ENCODE measurements at regions of chr11 and their contacts with region 1.

Region 1: GRCh38 chr11:109946322-109946846 is 146.8 kb upstream of the ZC3H12C start:
- DNase-seq: peak; percentile 64 to 78
- ATAC-seq: peak; percentile 99
- H3K4me3 ChIP-seq: peak overlapping the region; percentile 27 to 37 (median 34)
- H3K27ac ChIP-seq: peak overlapping the region; percentile 64 to 70 (median 66)
- H3K4me1 ChIP-seq: peaks cover 6 to 8% of the 10 kb centered on the region in 2 donors
- H3K27me3 ChIP-seq: no peaks in the 10 kb centered on the region
- CTCF ChIP-seq: peak; percentile 83 to 93 (median 87)
- POLR2A ChIP-seq: peak in 1 of 2 donors; percentile 17

Region 2: GRCh38 chr11:108713076-108713790 is 1233.2 kb before region 1 on chr11:
- in situ Hi-C with region 1: loop called in 1 of 4 experiments (anchors 25 kb)
- intact Hi-C with region 1: no loop called
- DNase-seq: no peak
- ATAC-seq: no peak
- H3K4me3 ChIP-seq: no peak overlapping the region
- H3K27ac ChIP-seq: no peak overlapping the region
- H3K4me1 ChIP-seq: no peaks in the 10 kb centered on the region
- H3K27me3 ChIP-seq: no peaks in the 10 kb centered on the region
- CTCF ChIP-seq: no peak
- POLR2A ChIP-seq: no peak

Region 3: GRCh38 chr11:108853864-108854263 is 1092.5 kb before region 1 on chr11:
- in situ Hi-C with region 1: no loop called
- intact Hi-C with region 1: no loop called
- DNase-seq: peak in 1 of 2 donors; percentile 55
- ATAC-seq: peak; percentile 74 to 91
- H3K4me3 ChIP-seq: peak overlapping the region; percentile 17 to 20 (median 18)
- H3K27ac ChIP-seq: peak overlapping the region; percentile 46 to 69 (median 62)
- H3K4me1 ChIP-seq: peaks cover 32% of the 10 kb centered on the region in 2 donors
- H3K27me3 ChIP-seq: no peaks in the 10 kb centered on the region
- CTCF ChIP-seq: no peak
- POLR2A ChIP-seq: no peak

Region 4: DNA sequence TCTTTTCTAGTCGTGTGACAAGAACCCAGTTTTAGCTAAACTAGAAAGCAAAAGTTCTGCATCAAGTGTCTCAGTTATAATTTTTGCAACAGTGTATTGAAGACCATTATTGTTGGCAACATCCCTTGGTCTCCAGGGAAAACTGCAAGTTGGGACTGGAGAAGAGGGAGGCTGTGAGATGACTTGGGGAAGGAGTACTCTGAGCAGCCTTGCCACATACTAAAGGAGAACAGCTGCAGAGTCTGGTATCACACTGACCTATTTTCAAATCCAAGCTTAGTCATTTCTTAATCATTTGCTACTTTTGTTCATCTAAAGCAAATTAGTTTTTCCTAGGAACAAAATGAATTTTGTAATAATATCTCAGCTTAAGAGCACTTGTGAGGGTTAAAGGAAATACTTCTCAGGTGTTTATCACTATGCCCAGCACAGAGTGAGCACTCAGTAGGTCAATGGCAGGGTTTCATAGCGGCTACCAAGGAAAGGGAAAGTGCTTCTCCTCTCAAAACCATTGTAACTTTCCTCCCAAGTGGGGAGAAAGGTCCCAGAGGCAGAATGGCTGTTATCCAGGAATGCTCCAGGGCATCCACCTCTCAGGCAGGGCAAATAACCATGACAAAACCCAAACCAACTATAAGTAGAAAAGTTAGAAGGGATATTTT is 277.3 kb before region 1 on chr11:
- in situ Hi-C with region 1: no loop called
- intact Hi-C with region 1: no loop called
- DNase-seq: no peak
- ATAC-seq: no peak
- H3K4me3 ChIP-seq: no peak overlapping the region
- H3K27ac ChIP-seq: no peak overlapping the region
- H3K4me1 ChIP-seq: no peaks in the 10 kb centered on the region
- H3K27me3 ChIP-seq: no peaks in the 10 kb centered on the region
- CTCF ChIP-seq: no peak
- POLR2A ChIP-seq: no peak

Region 5: DNA sequence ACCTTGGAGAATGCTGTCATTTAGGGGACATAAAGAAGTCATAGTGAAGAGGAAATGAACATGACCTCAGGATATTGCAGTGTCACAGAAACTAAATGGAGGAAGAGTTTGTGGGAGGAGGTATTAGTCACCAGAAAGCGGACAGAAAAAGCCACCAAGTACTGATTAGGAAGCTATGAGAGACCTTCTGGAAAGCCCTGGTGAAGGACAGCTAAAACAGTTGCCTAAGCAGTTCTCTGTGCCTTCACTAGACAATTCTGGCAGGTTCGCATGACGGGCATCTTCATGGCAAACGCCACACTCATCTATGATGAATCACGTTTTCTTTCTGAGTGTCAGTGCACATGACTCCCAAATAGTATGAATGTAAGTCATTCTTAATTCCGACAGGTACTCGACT is 198.5 kb before region 1 on chr11:
- in situ Hi-C with region 1: no loop called
- intact Hi-C with region 1: no loop called
- DNase-seq: no peak
- ATAC-seq: no peak
- H3K4me3 ChIP-seq: no peak overlapping the region
- H3K27ac ChIP-seq: no peak overlapping the region
- H3K4me1 ChIP-seq: no peaks in the 10 kb centered on the region
- H3K27me3 ChIP-seq: no peaks in the 10 kb centered on the region
- CTCF ChIP-seq: no peak
- POLR2A ChIP-seq: no peak

Region 6: DNA sequence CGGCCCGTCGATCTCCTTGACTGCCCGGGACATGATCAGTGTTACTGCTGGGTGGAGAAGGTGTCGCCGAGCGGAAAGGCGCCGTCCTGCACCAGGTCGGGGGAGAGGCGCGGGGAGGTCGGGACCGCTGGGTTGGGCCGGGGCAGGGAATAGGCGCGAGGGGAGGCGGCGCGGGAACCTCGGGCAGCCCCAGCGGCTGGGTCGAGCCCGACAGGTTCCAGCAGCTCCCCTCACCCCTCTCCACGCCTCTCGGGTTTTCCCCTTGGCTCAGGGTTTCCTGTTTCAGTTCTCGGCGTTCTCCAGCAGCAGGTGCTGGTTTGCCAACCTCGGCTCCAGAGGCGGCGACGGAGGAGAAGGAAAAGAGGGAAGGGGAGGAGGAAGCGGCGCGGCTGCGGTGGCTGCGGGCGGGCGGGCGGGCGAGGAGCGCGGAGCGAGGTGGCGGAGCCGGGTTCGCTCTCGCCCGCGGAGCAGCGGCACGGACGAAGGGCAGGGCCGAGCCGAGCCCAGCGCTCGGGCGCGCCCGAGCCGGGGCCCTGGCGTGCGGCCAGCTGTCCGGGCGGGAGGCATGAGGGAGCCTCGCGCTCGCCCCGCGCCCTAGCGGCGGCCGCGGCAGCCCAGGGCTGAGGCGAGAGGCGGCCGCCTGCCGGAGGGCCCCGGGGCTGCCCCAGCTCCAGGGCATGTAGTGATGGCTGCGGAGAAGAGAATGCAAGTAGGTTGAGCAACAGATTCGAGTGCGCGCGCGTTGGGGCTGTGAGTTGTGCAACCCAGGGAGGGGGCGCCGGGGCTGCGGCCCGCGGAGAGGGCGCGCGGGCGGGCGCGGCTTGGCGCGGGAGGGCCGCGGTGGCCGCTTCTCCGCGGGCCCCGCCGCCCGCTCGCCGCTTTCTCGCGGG is 146.4 kb after region 1 on chr11 and contains the start of gene ZC3H12C:
- in situ Hi-C with region 1: loop called in 1 of 4 experiments (anchors 10 kb)
- intact Hi-C with region 1: loop called (anchors 1 kb)
- DNase-seq: peak; percentile 84 to 90
- ATAC-seq: peak; percentile 85 to 88
- H3K4me3 ChIP-seq: peak within 1 kb of the TSS; percentile 72 to 95 (median 80)
- H3K27ac ChIP-seq: peak within 1 kb of the TSS; percentile 86 to 99 (median 96)
- H3K4me1 ChIP-seq: peaks cover 19 to 28% of the 10 kb centered on the region in 2 donors
- H3K27me3 ChIP-seq: no peaks in the 10 kb centered on the region
- CTCF ChIP-seq: peak in 4 of 5 experiments; percentile 64 to 93 (median 74)
- POLR2A ChIP-seq: peak; percentile 63 to 78
- total RNA-seq, gene ZC3H12C: 20.9 to 41.1 (median 30.9) TPM

Region 7: GRCh38 chr11:110195845-110196754 is 249.7 kb after region 1 on chr11:
- in situ Hi-C with region 1: no loop called
- intact Hi-C with region 1: loop called (anchors 1 kb)
- DNase-seq: no peak
- ATAC-seq: no peak
- H3K4me3 ChIP-seq: no peak overlapping the region
- H3K27ac ChIP-seq: no peak overlapping the region
- H3K4me1 ChIP-seq: no peaks in the 10 kb centered on the region
- H3K27me3 ChIP-seq: no peaks in the 10 kb centered on the region
- CTCF ChIP-seq: no peak
- POLR2A ChIP-seq: no peak

Region 8: GRCh38 chr11:110376711-110377324 is 430.4 kb after region 1 on chr11:
- in situ Hi-C with region 1: loop called (anchors 10 to 25 kb)
- intact Hi-C with region 1: loop called (anchors 5 kb)
- DNase-seq: peak; percentile 40 to 71
- ATAC-seq: peak; percentile 93
- H3K4me3 ChIP-seq: peak overlapping the region; percentile 29 to 48 (median 37)
- H3K27ac ChIP-seq: peak overlapping the region; percentile 46 to 68 (median 57)
- H3K4me1 ChIP-seq: peaks cover 0 to 3% of the 10 kb centered on the region in 2 donors
- H3K27me3 ChIP-seq: no peaks in the 10 kb centered on the region
- CTCF ChIP-seq: peak; percentile 56 to 84 (median 67)
- POLR2A ChIP-seq: no peak